ENCODE measurements at regions of chr10 and their contacts with region 1.

Region 1: DNA sequence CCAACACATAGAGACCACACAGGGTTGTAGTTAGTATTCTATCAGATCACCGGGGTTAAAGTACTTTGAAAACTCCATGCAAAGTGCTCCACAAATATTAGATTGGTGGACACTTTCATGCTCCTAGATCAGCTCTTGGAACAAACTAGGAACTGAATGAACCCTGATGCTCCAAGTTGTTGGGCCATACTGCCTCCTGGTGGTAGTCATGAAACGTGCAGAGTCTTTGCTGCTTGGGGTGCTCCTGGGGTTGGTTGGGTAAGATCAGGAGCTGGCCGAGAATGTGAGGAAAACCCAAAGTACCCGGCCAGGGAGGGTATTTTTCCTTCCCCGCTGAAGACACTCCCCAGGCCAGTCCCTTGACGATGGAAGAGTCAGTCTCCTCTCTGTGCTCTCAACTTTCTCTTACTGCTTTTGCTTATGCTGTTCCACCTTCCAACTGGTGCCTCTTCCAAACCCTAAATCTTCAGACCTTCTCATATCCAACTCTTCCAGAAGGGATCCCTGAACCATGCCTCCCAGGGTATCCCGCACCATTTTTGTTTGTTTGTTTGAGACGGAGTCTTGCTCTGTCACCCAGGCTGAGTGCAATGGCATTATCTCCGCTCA is 920 bp upstream of the RPEL1 start:
- DNase-seq: peak; percentile 48 to 58 (median 52)
- H3K4me3 ChIP-seq: no peak overlapping the region
- H3K4me3 Mint-ChIP-seq: no peak overlapping the region
- H3K27ac ChIP-seq: no peak overlapping the region
- H3K27ac Mint-ChIP-seq: peak overlapping the region in 1 of 7 donors; percentile 46
- H3K4me1 ChIP-seq: no peaks in the 10 kb centered on the region
- H3K4me1 Mint-ChIP-seq: peaks cover 5 to 11% (median 7%) of the 10 kb centered on the region in 4 donors
- H3K27me3 ChIP-seq: no peaks in the 10 kb centered on the region
- H3K27me3 Mint-ChIP-seq: peaks cover 4 to 6% of the 10 kb centered on the region in 2 donors

Region 2: DNA sequence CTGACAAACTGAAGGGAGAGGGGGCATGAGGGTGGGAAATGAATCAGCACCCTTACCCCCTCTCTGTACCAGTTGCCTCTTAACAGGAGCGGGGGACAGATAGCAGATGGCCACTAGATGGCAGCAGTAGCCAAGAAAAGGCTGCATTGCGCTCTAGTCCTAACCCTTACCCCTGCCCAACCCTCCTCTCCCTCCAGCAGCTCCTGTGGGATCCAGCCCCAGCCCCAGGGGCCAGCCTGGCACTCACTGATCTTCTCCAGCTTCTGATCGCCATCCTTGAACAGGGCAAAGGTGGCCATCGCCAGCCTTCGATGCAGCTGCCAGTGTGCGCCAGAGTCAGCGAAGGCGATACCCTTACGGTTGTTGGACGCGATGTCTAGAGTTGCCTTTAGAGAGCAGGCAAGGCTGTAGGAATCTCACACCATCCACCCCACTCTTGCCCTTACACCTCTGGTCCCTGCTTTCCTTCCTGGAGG is 409.7 kb before region 1 on chr10:
- CTCF ChIA-PET with region 1: interaction called, 32 read pairs
- POLR2A ChIA-PET with region 1: no interaction called
- intact Hi-C with region 1: loop called (anchors 1 kb)
- DNase-seq: peak; percentile 63 to 70 (median 66)
- H3K4me3 ChIP-seq: no peak overlapping the region
- H3K4me3 Mint-ChIP-seq: no peak overlapping the region
- H3K27ac ChIP-seq: no peak overlapping the region
- H3K27ac Mint-ChIP-seq: no peak overlapping the region
- H3K4me1 ChIP-seq: no peaks in the 10 kb centered on the region
- H3K4me1 Mint-ChIP-seq: peaks cover 0 to 1% (median 0%) of the 10 kb centered on the region in 4 donors
- H3K27me3 ChIP-seq: no peaks in the 10 kb centered on the region
- H3K27me3 Mint-ChIP-seq: peaks cover 3 to 12% of the 10 kb centered on the region in 2 donors

Region 3: DNA sequence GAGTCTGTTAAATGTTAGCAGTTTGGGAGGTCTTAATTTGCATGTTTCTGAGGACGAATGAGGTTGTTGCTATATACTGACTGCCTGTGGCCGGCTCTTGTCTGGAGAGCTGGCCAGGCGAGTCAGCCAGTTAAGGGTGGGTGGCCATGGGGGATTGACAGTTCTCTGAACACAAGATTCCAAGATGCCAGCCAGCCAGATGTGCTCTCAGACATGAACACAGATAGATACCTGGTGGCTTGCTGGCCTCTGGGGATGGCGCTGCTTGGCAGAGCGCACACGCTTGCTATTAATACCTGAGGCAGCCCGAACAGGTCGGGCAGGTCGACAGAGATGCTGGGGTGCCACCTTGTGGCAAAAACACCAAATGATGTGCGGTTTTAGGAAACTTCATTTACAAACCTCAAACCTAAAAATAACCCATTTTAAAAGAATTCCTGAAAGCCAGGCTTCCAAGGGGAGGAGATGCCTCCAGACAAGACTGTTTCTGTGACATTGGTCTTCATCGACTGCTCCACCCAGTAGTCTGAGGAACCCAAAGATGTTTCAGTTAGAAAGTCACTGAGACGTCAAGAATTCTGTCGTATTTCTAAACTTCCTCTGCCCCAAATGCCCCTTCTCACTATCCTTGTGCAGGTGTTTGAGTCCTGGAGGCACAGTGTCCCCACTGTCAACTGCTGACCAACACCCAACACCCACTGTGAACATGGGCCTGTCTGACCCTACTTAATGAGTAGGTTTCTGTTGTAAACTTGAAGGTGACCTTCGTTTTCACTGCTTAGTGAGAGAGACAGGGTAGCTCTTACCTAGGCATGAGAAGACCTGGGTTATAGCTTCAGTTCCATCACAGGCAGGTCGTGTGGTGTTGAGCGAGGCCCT is 175.1 kb before region 1 on chr10:
- CTCF ChIA-PET with region 1: interaction called, 3 read pairs
- POLR2A ChIA-PET with region 1: no interaction called
- intact Hi-C with region 1: loop called (anchors 1 kb)
- DNase-seq: peak; percentile 65 to 72 (median 70)
- H3K4me3 ChIP-seq: no peak overlapping the region
- H3K4me3 Mint-ChIP-seq: peak overlapping the region in 5 of 8 donors; percentile 1 to 61 (median 24)
- H3K27ac ChIP-seq: no peak overlapping the region
- H3K27ac Mint-ChIP-seq: peak overlapping the region; percentile 46 to 79 (median 67)
- H3K4me1 ChIP-seq: peaks cover 24% of the 10 kb centered on the region
- H3K4me1 Mint-ChIP-seq: peaks cover 14 to 31% (median 22%) of the 10 kb centered on the region in 4 donors
- H3K27me3 ChIP-seq: no peaks in the 10 kb centered on the region
- H3K27me3 Mint-ChIP-seq: no peaks in the 10 kb centered on the region

Region 4: DNA sequence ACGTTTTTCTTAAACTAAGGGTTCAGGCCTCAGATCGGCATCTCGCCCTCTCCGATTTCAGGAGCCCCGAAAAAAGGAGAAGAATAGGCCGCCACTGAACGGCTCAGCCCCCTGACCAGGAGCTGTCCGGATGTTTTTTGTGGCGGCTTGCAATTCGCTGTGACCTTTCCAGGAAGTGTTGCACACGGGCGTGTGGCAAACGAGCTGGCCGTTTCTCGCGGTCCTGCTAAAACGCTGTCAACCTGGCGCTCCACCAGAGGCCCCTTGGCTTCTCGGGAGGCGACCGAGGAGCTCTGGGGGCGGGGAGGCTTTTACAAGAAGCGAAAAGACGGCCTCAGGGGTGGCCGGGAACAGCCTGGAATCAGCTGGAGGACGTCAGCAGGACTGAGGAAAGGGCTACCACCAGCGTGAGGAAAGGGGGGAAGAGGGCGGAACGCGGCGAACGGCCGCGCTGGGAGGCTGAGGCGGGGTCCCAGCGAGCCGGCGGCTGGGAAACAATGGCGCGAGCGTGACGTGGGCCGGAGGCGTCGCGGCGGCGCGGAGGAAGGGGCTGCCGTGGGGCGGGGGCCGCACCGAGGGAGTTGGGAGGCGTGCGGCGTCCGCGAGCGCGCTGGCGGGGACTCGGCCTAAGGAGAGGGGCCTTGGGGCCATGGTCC is 52.2 kb before region 1 on chr10:
- CTCF ChIA-PET with region 1: interaction called, 8 read pairs
- POLR2A ChIA-PET with region 1: no interaction called
- intact Hi-C with region 1: loop called (anchors 1 kb)
- DNase-seq: peak; percentile 48 to 68 (median 56)
- H3K4me3 ChIP-seq: peak overlapping the region; percentile 80 to 81
- H3K4me3 Mint-ChIP-seq: peak overlapping the region; percentile 94 to 99 (median 98)
- H3K27ac ChIP-seq: peak overlapping the region; percentile 76
- H3K27ac Mint-ChIP-seq: peak overlapping the region; percentile 94 to 98 (median 97)
- H3K4me1 ChIP-seq: peaks cover 45% of the 10 kb centered on the region
- H3K4me1 Mint-ChIP-seq: peaks cover 29 to 56% (median 41%) of the 10 kb centered on the region in 4 donors
- H3K27me3 ChIP-seq: no peaks in the 10 kb centered on the region
- H3K27me3 Mint-ChIP-seq: no peaks in the 10 kb centered on the region

Region 5: DNA sequence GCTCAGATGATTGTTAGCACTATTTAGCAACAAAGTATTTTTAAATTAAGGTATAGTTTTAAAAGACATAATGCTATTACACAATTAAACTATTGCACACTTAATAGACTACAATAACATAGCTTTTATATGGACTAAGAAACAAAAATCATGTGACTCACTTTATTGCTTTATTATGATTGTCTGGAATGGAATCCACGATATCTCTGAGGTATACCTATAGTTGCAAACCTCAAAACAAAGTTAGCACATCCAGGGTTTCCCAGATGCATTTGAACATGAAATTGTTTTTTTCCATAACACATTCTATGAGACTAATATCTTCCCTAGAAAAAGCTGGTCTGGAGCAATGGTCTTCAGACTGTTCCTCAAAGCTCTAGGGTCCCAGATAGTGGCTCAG is 17.4 kb before region 1 on chr10:
- CTCF ChIA-PET with region 1: interaction called, 11 read pairs
- POLR2A ChIA-PET with region 1: no interaction called
- intact Hi-C with region 1: no loop called
- DNase-seq: no peak
- H3K4me3 ChIP-seq: no peak overlapping the region
- H3K4me3 Mint-ChIP-seq: no peak overlapping the region
- H3K27ac ChIP-seq: no peak overlapping the region
- H3K27ac Mint-ChIP-seq: no peak overlapping the region
- H3K4me1 ChIP-seq: no peaks in the 10 kb centered on the region
- H3K4me1 Mint-ChIP-seq: no peaks in the 10 kb centered on the region
- H3K27me3 ChIP-seq: no peaks in the 10 kb centered on the region
- H3K27me3 Mint-ChIP-seq: peaks cover under 1 to 2% of the 10 kb centered on the region in 2 donors

Measured in CD4-positive, alpha-beta memory T cell (primary cell).